Tibial artery (tissue), 4 donors: ENCODE measurements at regions of chr15 and their contacts with region 1.

Region 1: DNA sequence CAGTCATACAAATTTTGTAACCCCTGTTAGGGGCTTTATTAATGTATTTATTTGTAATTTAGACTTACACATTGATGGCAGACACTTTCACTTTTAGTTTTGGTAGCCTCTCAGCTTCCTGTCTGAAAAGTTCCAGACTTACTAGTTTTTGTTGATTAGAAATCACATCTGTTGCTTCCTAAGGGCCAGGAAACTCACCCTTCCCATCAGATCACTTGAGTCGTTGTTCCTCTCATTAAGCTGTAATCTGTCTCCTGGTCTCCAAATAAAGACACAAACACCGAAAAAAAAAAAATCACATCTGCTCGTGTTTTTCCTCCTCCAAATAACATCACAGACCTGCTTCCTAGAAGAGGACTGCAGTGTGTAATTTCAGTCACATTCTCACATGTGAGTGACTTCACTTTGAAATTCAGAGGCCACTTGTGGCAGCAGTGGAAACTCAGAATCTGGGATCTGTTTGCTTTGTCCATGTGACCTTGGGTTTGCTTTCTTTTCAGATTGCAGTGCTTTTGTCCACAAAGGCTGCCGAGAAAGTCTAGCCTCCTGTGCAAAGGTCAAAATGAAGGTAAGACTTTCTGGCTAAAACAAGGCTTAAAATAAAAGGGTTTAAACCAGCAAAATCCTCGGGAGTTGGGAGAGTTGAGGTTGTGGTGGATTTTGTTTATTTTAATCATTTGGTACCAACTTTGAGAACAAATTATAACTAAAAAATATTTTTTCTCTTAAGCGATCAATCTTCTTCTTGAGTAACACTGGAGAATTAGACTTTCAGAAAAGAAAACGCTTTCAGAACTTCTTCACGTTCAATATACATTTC is 87.0 kb downstream of the KLHL25 start:
- DNase-seq: no peak
- H3K4me3 ChIP-seq: peak overlapping the region; percentile 14 to 25
- H3K27ac ChIP-seq: peak overlapping the region; percentile 79 to 84
- H3K4me1 ChIP-seq: peaks cover 0 to 65% (median 30%) of the 10 kb centered on the region in 4 donors
- H3K27me3 ChIP-seq: no peaks in the 10 kb centered on the region
- CTCF ChIP-seq: no peak

Region 2: DNA sequence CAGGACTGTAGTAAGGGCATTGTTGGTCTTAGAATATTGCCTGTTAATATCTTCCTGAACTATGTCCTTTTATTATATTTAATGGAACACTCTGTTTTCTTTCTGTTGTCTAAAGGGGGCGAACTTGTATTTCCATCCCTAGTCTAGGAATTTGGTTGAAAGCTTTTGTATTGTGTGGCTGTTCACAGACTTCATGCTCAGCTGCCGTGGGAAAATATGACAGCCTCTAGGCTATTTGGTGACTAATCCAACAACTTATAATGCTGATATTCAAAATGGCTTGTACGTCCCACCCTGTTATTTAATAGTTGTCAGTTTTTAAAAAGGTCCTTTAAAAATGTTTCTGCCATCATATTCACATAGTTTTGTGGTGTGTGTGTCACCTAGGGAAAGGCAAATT is 115.6 kb before region 1 on chr15:
- intact Hi-C with region 1: no loop called
- DNase-seq: no peak
- H3K4me3 ChIP-seq: no peak overlapping the region
- H3K27ac ChIP-seq: no peak overlapping the region
- H3K4me1 ChIP-seq: peaks cover 0 to 47% (median 10%) of the 10 kb centered on the region in 4 donors
- H3K27me3 ChIP-seq: no peaks in the 10 kb centered on the region
- CTCF ChIP-seq: peak in 1 of 2 experiments; percentile 13

Region 3: DNA sequence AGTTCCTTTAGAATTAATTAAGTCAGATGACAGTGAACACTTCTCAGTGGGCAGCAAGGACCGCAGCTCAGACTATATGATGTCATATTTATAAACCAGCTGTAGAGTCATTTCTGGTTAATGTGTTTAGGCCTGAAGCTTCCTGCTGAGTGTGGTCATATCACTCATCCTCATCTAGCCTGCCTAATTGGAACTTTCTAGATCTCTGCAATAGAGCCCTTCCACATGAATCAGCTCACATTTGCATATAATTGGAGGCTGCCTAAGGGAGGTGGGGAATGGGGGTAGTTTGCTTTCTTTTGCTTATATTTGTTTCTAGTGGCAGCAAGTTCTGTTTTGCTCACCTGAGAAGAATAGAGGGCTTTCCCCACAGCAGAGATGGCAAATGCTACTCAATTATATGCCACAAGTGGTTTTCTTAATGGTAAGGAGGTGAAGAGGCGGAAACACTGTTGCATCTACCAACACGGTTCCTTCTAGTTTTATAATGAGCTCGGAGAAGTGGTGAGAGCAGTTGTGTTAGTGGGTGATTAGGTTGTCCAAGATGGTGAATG is 61.1 kb before region 1 on chr15:
- intact Hi-C with region 1: loop called (anchors 10 kb)
- DNase-seq: no peak
- H3K4me3 ChIP-seq: no peak overlapping the region
- H3K27ac ChIP-seq: peak overlapping the region in 1 of 2 donors; percentile 32
- H3K4me1 ChIP-seq: peaks cover 0 to 69% (median 35%) of the 10 kb centered on the region in 4 donors
- H3K27me3 ChIP-seq: no peaks in the 10 kb centered on the region
- CTCF ChIP-seq: no peak